PC-9 (cell line): ENCODE measurements at regions of chr2 and their contacts with region 1.

Region 1: GRCh38 chr2:113124181-113124961 is 3.0 kb upstream of the IL1RN start:
- DNase-seq: peak; percentile 18 to 66
- H3K4me3 ChIP-seq: no peak overlapping the region
- H3K27ac ChIP-seq: 0 out of 2 replicates have a peak overlapping the region, but pooled peaks have one; percentile 20
- H3K4me1 ChIP-seq: peaks cover 22% of the 10 kb centered on the region
- H3K27me3 ChIP-seq: no peaks in the 10 kb centered on the region
- CTCF ChIP-seq: no peak

Region 2: GRCh38 chr2:113148606-113149560 is 24.5 kb after region 1 on chr2:
- CTCF ChIA-PET with region 1: no interaction called
- POLR2A ChIA-PET with region 1: interaction called, 10 read pairs
- intact Hi-C with region 1: no loop called
- DNase-seq: no peak
- H3K4me3 ChIP-seq: no peak overlapping the region
- H3K27ac ChIP-seq: no peak overlapping the region
- H3K4me1 ChIP-seq: no peaks in the 10 kb centered on the region
- H3K27me3 ChIP-seq: no peaks in the 10 kb centered on the region
- CTCF ChIP-seq: no peak